MCF 10A (cell line): ENCODE measurements at regions of chr7 and their contacts with region 1.

Region 1: DNA sequence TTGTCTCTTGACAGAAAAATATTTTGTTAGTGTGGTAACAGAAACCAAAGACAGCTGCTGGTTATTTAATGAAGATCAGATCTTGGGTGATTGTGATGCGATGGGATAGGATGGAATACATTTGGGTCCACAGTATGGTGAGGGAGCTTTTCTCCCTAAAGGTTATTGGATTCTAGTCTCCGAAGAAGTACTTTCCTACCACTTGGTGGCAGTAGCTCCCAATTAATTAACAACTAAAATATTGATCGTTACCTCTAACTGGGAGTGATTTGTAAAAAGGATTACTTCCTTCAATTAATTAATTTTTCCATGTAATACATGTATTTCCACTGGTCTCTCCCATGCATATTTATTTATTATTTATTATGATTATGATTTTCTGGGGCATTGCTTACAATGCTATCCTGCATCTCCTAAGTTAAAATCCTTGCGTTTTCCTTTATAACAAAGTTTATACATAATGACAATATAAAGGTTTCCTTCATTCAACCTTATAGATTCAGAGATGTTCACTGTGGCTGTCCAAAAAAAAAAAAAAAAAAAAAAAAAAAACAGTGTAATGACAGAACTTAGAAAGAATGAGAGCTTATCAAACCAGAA is 25.6 kb downstream of the TMEM196 start:
- DNase-seq: peak; percentile 59
- H3K4me3 Mint-ChIP-seq: no peak overlapping the region
- H3K27ac Mint-ChIP-seq: no peak overlapping the region
- H3K4me1 Mint-ChIP-seq: peaks cover 9% of the 10 kb centered on the region
- H3K27me3 Mint-ChIP-seq: no peaks in the 10 kb centered on the region
- CTCF ChIP-seq: peak; percentile 66

Region 2: DNA sequence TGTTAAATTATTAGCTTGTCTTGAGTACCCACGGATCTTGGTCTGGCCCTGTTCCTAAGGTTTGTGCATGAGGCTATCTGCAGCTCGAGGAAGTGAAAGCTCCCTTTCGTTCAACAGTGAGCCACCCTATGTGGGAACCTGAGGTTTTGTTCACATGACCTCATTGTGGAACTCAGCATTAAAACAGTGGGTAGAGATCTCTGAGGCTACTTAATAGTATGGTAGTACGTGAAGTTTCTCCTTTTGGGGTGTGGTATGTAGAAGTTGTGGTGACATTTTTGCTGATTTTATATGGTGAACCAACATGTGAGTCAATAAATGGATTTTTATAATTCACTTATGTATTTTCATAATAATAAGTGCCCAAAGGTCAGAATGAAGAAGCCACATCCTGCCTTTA is 349.9 kb before region 1 on chr7:
- CTCF ChIA-PET with region 1: no interaction called
- POLR2A ChIA-PET with region 1: no interaction called
- intact Hi-C with region 1: no loop called
- DNase-seq: no peak
- H3K4me3 Mint-ChIP-seq: no peak overlapping the region
- H3K27ac Mint-ChIP-seq: peak overlapping the region; percentile 20
- H3K4me1 Mint-ChIP-seq: peaks cover 6% of the 10 kb centered on the region
- H3K27me3 Mint-ChIP-seq: no peaks in the 10 kb centered on the region
- CTCF ChIP-seq: no peak

Region 3: DNA sequence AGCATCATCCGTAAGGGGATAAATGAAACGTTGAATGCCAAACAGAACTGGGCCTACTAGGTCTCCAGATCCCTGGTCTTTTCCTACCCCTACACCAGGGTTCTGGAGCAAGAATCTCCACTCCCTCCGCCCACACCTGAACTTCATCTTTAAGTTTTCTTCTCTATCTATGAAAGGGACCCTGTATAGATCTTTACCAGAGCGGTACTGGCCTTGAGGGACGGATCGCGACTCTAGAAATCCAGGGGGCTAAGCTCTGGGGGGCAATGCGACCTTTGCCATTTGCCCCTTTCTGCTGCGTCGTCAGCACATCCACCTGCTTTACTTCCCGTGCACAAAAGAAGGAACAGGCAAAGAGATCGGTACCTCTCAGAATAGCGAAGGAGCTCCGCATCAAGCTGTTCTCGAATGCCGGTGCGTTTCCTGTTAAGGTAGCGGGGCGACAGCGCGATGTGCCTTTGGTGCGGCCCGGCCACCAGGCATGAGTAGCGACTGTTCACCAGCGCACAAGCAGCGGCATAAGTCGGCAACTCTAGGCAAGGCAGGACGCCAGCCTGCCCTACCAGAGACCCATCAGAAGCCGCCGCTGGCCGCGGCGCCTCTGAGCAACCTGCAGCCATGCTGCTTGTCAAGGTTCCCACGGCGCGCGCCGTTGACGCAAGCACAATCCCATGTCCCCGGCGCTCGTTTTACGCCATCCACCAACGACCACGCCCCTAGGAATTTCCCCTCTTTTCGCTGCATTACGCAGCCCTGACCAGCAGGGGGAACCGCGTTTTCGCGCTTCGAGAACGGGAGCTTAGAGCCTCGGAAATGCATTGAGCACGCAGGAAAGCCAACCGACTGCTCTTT is 39.2 kb before region 1 on chr7 and contains the start of gene POLR1F:
- CTCF ChIA-PET with region 1: interaction called, 26 read pairs
- POLR2A ChIA-PET with region 1: interaction called, 5 read pairs
- intact Hi-C with region 1: loop called (anchors 1 kb)
- DNase-seq: peak; percentile 96
- H3K4me3 Mint-ChIP-seq: peak within 1 kb of the TSS; percentile 97
- H3K27ac Mint-ChIP-seq: peak within 1 kb of the TSS; percentile 94
- H3K4me1 Mint-ChIP-seq: peaks cover 38% of the 10 kb centered on the region
- H3K27me3 Mint-ChIP-seq: no peaks in the 10 kb centered on the region
- CTCF ChIP-seq: peak; percentile 85
- total RNA-seq, gene POLR1F: 21.4 and 22.8 TPM in 2 replicates

Region 4: GRCh38 chr7:19713676-19714075 is 34.2 kb before region 1 on chr7:
- CTCF ChIA-PET with region 1: interaction called, 26 read pairs
- POLR2A ChIA-PET with region 1: interaction called, 5 read pairs
- intact Hi-C with region 1: loop called (anchors 1 kb)
- DNase-seq: peak; percentile 58
- H3K4me3 Mint-ChIP-seq: no peak overlapping the region
- H3K27ac Mint-ChIP-seq: no peak overlapping the region
- H3K4me1 Mint-ChIP-seq: peaks cover 16% of the 10 kb centered on the region
- H3K27me3 Mint-ChIP-seq: no peaks in the 10 kb centered on the region
- CTCF ChIP-seq: peak; percentile 47

Region 5: DNA sequence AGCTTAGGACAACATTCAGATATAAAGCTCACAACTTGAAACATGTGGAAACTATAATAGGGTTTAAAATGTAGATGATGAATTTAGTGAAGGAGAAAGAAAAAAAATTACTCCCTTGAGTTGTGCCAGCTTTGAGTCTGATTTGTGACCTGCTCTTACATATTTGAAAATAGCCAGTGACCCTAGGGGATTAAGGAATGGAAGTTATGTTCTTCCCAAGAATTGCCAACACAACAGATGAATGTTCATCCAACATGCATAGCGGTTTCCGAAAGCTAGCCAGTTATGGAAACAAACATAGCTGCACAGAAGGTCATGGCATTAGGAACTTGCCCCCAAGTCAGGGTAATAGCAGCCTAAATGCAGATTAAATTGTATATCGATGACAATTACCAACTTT is 14.8 kb after region 1 on chr7:
- CTCF ChIA-PET with region 1: no interaction called
- POLR2A ChIA-PET with region 1: no interaction called
- intact Hi-C with region 1: no loop called
- DNase-seq: no peak
- H3K4me3 Mint-ChIP-seq: no peak overlapping the region
- H3K27ac Mint-ChIP-seq: no peak overlapping the region
- H3K4me1 Mint-ChIP-seq: no peaks in the 10 kb centered on the region
- H3K27me3 Mint-ChIP-seq: no peaks in the 10 kb centered on the region
- CTCF ChIP-seq: no peak

Region 6: GRCh38 chr7:20304376-20304775 is 556.5 kb after region 1 on chr7:
- CTCF ChIA-PET with region 1: interaction called, 15 read pairs
- POLR2A ChIA-PET with region 1: interaction called, 3 read pairs
- intact Hi-C with region 1: no loop called
- DNase-seq: no peak
- H3K4me3 Mint-ChIP-seq: no peak overlapping the region
- H3K27ac Mint-ChIP-seq: no peak overlapping the region
- H3K4me1 Mint-ChIP-seq: peaks cover 25% of the 10 kb centered on the region
- H3K27me3 Mint-ChIP-seq: no peaks in the 10 kb centered on the region
- CTCF ChIP-seq: no peak

Region 7: DNA sequence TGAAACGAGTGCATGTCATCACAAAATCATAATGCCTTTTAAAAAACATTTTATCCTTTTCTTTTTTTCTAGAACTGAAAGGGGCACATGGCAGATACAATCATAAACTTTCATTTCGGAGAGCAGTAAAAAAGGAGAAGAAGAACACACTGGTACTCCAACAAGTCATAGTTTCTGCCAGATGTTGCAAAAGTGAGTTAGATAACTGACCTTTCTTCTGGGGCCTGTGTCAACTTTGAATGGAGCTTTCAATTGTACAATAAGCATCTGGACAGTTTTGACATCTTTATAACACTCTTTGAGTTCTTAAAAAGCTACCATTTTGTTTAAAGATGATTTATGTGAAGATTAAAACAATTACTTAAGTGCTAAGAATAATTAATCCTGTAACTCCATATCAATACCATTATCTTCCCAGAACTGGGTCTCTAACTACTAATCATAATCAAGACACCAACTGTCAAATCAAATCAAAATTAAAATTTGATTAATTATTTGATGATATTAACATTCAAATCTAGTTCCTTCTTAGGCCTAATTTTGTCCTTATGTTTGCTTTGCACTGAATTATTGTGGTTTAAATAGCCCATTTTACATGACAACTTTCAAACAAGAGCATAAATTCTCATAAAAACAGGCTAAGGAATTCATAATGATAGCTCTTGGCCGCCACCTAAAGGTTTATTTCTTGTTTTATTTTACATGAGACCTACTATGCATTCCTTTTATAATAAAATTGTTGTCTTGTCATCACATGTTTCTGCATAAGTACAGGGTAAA is 563.3 kb after region 1 on chr7:
- CTCF ChIA-PET with region 1: interaction called, 15 read pairs
- POLR2A ChIA-PET with region 1: interaction called, 3 read pairs
- intact Hi-C with region 1: loop called (anchors 1 kb)
- DNase-seq: peak; percentile 64
- H3K4me3 Mint-ChIP-seq: no peak overlapping the region
- H3K27ac Mint-ChIP-seq: no peak overlapping the region
- H3K4me1 Mint-ChIP-seq: peaks cover 12% of the 10 kb centered on the region
- H3K27me3 Mint-ChIP-seq: no peaks in the 10 kb centered on the region
- CTCF ChIP-seq: peak; percentile 65

Region 8: DNA sequence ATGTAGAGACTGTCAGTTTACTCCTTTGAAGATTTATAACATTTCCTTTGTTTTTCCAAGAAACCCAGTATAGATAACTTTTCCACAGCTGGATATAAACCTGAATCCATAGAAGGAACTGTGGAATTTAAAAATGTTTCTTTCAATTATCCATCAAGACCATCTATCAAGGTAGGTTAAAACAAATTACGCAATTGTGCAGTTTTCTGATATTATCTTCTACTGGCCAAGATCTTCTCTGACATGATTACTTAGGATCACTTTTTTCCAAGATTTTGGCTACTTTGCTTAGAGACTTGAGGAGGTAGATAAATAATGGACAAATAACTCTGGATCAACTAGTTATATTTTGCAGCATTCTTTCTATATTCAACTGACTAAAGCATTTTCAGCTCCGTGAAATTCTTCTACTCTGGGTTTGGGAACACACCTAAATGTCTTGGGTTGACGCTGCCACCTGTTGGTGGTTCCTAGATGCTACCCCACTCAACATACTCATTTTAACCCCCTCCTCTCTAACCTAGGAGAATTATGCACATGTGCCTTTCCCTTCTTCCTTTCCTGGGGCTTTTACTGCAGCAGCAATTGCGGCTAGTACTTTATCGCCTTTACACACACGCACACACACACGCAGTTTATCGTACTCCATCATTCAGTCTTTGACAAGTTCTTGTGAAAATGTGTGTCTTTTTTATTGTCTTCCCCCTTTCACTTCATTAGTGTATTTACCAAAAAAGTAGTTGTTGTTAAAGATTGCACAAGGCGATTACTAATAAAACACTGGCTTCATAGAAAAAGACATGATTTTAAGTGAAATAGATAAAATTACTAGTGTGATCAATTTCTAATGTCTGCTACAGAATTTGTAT is 900.3 kb after region 1 on chr7:
- CTCF ChIA-PET with region 1: interaction called, 39 read pairs
- POLR2A ChIA-PET with region 1: no interaction called
- intact Hi-C with region 1: loop called (anchors 2 kb)
- DNase-seq: peak; percentile 64
- H3K4me3 Mint-ChIP-seq: no peak overlapping the region
- H3K27ac Mint-ChIP-seq: no peak overlapping the region
- H3K4me1 Mint-ChIP-seq: peaks cover 5% of the 10 kb centered on the region
- H3K27me3 Mint-ChIP-seq: no peaks in the 10 kb centered on the region
- CTCF ChIP-seq: peak; percentile 51